ENCODE measurements at regions of chr10 and their contacts with region 1.

Region 1: DNA sequence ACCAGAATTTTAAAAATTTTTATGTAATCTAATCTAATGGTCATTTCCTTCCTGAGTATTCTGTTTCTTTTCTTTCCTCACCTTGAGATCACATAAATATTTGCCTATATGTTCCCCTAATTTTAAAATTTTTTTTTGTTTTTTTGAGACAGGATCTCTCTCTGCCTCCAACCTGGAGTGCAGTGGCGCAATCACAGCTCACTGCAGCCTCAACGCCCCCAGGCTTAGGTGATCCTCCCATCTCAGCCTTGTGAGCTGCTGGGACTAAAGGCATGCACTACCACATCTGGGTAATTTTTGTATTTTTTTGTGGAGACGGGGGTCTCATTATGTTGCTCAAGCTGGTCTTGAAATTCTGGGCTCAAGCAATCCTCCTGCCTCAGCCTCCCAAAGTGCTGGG is 4.1 kb upstream of the PROSER2 start:
- DNase-seq: no peak
- ATAC-seq: no peak
- H3K4me3 ChIP-seq: no peak overlapping the region
- H3K4me3 Mint-ChIP-seq: no peak overlapping the region
- H3K27ac ChIP-seq: no peak overlapping the region
- H3K27ac Mint-ChIP-seq: no peak overlapping the region
- H3K4me1 ChIP-seq: no peaks in the 10 kb centered on the region
- H3K4me1 Mint-ChIP-seq: peaks cover 6% of the 10 kb centered on the region
- H3K27me3 ChIP-seq: peaks cover 5% of the 10 kb centered on the region in 2 experiments
- H3K27me3 Mint-ChIP-seq: peaks cover 23% of the 10 kb centered on the region
- CTCF ChIP-seq: no peak

Region 2: GRCh38 chr10:11830836-11831519 is 11.9 kb after region 1 on chr10:
- CTCF ChIA-PET with region 1: interaction called, 16 read pairs
- POLR2A ChIA-PET with region 1: no interaction called
- intact Hi-C with region 1: no loop called
- DNase-seq: no peak
- ATAC-seq: no peak
- H3K4me3 ChIP-seq: no peak overlapping the region
- H3K4me3 Mint-ChIP-seq: no peak overlapping the region
- H3K27ac ChIP-seq: no peak overlapping the region
- H3K27ac Mint-ChIP-seq: no peak overlapping the region
- H3K4me1 ChIP-seq: no peaks in the 10 kb centered on the region
- H3K4me1 Mint-ChIP-seq: peaks cover 1% of the 10 kb centered on the region
- H3K27me3 ChIP-seq: peaks cover 0 to 7% of the 10 kb centered on the region in 2 experiments
- H3K27me3 Mint-ChIP-seq: peaks cover 23% of the 10 kb centered on the region
- CTCF ChIP-seq: no peak